Common myeloid progenitor, CD34-positive (primary cell): ENCODE measurements at regions of chr11 and their contacts with region 1.

Region 1: DNA sequence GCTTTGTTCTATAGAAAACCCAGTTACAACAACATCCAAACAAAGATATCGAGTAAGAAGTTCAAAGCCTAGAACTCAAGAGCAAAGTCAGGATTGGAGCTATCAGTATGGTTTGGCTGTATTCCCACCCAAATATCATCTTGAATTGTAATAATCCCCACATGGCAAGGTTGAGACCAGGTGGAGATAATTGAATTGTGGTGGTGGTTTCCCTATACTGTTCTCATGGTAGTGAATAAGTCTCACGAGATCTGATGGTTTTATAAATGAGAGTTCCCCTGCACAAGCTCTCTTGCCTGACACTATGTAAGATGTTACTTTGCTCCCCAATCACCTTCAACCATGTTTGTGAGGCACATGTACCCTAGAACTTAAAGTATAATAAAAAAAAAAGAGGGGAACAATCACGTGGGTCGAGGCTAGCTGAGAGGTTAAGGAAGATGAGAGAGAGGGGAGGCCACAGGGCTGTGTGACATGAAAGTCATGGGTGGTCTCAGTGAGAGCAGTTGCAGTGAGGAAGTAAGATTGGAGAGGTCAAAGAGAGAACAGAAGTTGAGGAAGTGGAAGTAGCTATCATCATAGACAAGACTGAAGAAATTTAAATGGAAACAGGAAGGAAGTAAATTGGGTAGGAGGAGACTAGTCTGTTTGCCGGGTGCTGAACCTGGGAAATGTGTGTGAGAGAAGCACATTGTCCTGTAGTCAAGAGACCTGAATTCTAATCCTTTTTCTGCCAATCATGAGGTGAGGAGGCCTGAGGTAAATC is 80.1 kb upstream of the CD44 start:
- DNase-seq: no peak
- H3K4me3 ChIP-seq: no peak overlapping the region
- H3K27ac ChIP-seq: no peak overlapping the region
- H3K4me1 ChIP-seq: peaks cover 8 to 31% (median 10%) of the 10 kb centered on the region in 4 experiments
- H3K27me3 ChIP-seq: no peaks in the 10 kb centered on the region

Region 2: GRCh38 chr11:34869426-34869825 is 189.4 kb before region 1 on chr11:
- CTCF ChIA-PET with region 1: no interaction called
- POLR2A ChIA-PET with region 1: no interaction called
- DNase-seq: no peak
- H3K4me3 ChIP-seq: no peak overlapping the region
- H3K27ac ChIP-seq: no peak overlapping the region
- H3K4me1 ChIP-seq: peaks cover 0 to 15% (median 1%) of the 10 kb centered on the region in 4 experiments
- H3K27me3 ChIP-seq: no peaks in the 10 kb centered on the region

Region 3: GRCh38 chr11:35045236-35045820 is 13.5 kb before region 1 on chr11:
- CTCF ChIA-PET with region 1: interaction called, 12 read pairs
- POLR2A ChIA-PET with region 1: no interaction called
- DNase-seq: peak; percentile 86 to 97 (median 96)
- H3K4me3 ChIP-seq: peak overlapping the region in 1 of 7 experiments; percentile 23
- H3K27ac ChIP-seq: peak overlapping the region; percentile 80 to 83
- H3K4me1 ChIP-seq: peaks cover 23 to 79% (median 68%) of the 10 kb centered on the region in 4 experiments
- H3K27me3 ChIP-seq: no peaks in the 10 kb centered on the region

Region 4: GRCh38 chr11:35182317-35182939 is 123.6 kb after region 1 on chr11:
- CTCF ChIA-PET with region 1: no interaction called
- POLR2A ChIA-PET with region 1: no interaction called
- DNase-seq: no peak
- H3K4me3 ChIP-seq: no peak overlapping the region
- H3K27ac ChIP-seq: no peak overlapping the region
- H3K4me1 ChIP-seq: peaks cover 0 to 8% (median 0%) of the 10 kb centered on the region in 4 experiments
- H3K27me3 ChIP-seq: no peaks in the 10 kb centered on the region